CD4-positive, alpha-beta memory T cell (primary cell): ENCODE measurements at regions of chr13 and their contacts with region 1.

Region 1: GRCh38 chr13:30617315-30618185 is at the start of gene USPL1:
- DNase-seq: peak; percentile 97 to 99 (median 98)
- H3K4me3 ChIP-seq: peak within 1 kb of the TSS; percentile 98 to 99
- H3K4me3 Mint-ChIP-seq: no peak within 1 kb of the TSS
- H3K27ac ChIP-seq: peak within 1 kb of the TSS; percentile 94
- H3K27ac Mint-ChIP-seq: no peak within 1 kb of the TSS
- H3K4me1 ChIP-seq: peaks cover 40% of the 10 kb centered on the region
- H3K4me1 Mint-ChIP-seq: peaks cover 15 to 27% (median 25%) of the 10 kb centered on the region in 4 donors
- H3K27me3 ChIP-seq: no peaks in the 10 kb centered on the region
- H3K27me3 Mint-ChIP-seq: no peaks in the 10 kb centered on the region
- total RNA-seq, gene USPL1: 30.4 to 31.8 TPM

Region 2: GRCh38 chr13:29595380-29596063 is 1022.0 kb before region 1 on chr13 and contains the start of gene SLC7A1:
- CTCF ChIA-PET with region 1: no interaction called
- POLR2A ChIA-PET with region 1: no interaction called
- intact Hi-C with region 1: loop called (anchors 10 kb)
- DNase-seq: peak; percentile 80 to 90 (median 88)
- H3K4me3 ChIP-seq: peak within 1 kb of the TSS; percentile 59 to 61
- H3K4me3 Mint-ChIP-seq: peak within 1 kb of the TSS; percentile 87 to 94 (median 92)
- H3K27ac ChIP-seq: peak within 1 kb of the TSS; percentile 66
- H3K27ac Mint-ChIP-seq: peak within 1 kb of the TSS; percentile 90 to 97 (median 93)
- H3K4me1 ChIP-seq: peaks cover 25% of the 10 kb centered on the region
- H3K4me1 Mint-ChIP-seq: peaks cover 22 to 49% (median 34%) of the 10 kb centered on the region in 4 donors
- H3K27me3 ChIP-seq: no peaks in the 10 kb centered on the region
- H3K27me3 Mint-ChIP-seq: peaks cover 0 to 1% of the 10 kb centered on the region in 2 donors
- total RNA-seq, gene SLC7A1: 38.6 to 42.6 TPM

Region 3: DNA sequence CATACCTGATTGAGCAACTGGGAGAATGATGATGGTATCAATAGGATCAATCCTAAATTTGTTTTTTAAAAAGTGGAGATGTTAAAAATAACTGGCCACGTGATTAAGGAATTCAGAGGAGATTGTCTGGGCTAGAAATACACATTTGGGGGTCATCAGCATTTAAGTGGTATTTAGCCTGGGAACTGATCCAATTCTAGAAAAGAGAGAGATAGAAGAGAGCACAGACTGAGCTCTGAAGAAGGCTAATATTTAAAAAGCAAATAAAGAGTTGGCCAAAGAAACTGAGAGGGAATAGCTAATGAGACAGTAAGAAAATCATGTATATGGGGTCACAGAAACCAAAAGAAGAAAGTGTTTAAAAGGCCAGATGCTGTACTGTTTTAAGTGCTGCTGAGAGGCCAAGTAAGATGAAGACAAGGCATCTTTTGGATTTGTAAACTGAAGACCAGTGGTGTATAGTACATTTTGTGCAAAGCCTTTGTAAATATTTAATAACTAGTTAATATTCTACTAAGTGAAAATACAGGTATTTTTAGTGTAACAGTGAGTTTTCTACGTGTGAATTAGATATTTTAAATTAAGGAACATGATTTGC is 807.3 kb before region 1 on chr13:
- CTCF ChIA-PET with region 1: no interaction called
- POLR2A ChIA-PET with region 1: no interaction called
- intact Hi-C with region 1: no loop called
- DNase-seq: no peak
- H3K4me3 ChIP-seq: no peak overlapping the region
- H3K4me3 Mint-ChIP-seq: peak overlapping the region in 1 of 8 donors; percentile 54
- H3K27ac ChIP-seq: no peak overlapping the region
- H3K27ac Mint-ChIP-seq: peak overlapping the region in 1 of 7 donors; percentile 77
- H3K4me1 ChIP-seq: peaks cover 47% of the 10 kb centered on the region
- H3K4me1 Mint-ChIP-seq: peaks cover 43 to 56% (median 51%) of the 10 kb centered on the region in 4 donors
- H3K27me3 ChIP-seq: no peaks in the 10 kb centered on the region
- H3K27me3 Mint-ChIP-seq: no peaks in the 10 kb centered on the region

Region 4: DNA sequence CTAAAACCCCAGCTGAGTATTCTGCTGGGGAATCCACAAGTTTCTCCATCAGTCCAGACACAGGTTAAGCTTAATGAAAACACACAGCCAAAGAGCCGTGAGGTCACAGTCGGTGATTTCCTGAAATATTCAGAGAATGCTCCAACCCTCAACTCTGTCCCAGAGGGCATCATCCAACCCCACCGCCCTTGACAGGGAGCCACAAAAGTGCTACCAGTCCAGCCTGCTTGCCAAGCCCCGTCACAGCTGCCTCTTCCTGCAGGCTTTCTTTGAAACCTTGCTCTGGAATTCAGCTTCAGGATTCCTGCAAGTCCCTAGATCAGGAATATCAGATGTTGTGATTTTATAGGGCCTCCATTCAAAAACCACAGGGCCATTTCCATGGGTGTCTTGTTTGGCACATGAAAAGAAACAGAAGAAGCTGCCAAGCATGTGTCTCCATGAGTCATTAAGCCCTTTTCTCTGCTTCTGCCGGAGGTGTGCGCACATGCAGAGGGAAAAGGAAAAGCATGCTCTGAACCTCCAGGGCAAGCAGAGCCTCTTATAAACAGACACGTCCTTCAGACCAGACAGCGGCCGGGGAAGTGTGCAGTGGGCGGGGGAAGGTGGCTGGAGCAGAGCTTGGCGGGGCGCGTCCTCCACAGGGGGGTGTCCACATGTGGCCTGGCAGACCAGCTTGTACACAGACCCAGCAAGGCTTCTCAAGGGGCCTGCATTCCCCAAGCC is 474.9 kb before region 1 on chr13:
- CTCF ChIA-PET with region 1: no interaction called
- POLR2A ChIA-PET with region 1: interaction called, 4 read pairs
- intact Hi-C with region 1: loop called (anchors 5 kb)
- DNase-seq: peak; percentile 13 to 64 (median 22)
- H3K4me3 ChIP-seq: no peak overlapping the region
- H3K4me3 Mint-ChIP-seq: peak overlapping the region in 7 of 8 donors; percentile 4 to 74 (median 53)
- H3K27ac ChIP-seq: peak overlapping the region; percentile 27
- H3K27ac Mint-ChIP-seq: peak overlapping the region; percentile 83 to 92 (median 88)
- H3K4me1 ChIP-seq: peaks cover 67% of the 10 kb centered on the region
- H3K4me1 Mint-ChIP-seq: peaks cover 49 to 86% (median 70%) of the 10 kb centered on the region in 4 donors
- H3K27me3 ChIP-seq: no peaks in the 10 kb centered on the region
- H3K27me3 Mint-ChIP-seq: no peaks in the 10 kb centered on the region

Region 5: GRCh38 chr13:30371649-30372265 is 245.8 kb before region 1 on chr13:
- CTCF ChIA-PET with region 1: interaction called, 3 read pairs
- POLR2A ChIA-PET with region 1: interaction called, 76 read pairs
- intact Hi-C with region 1: loop called (anchors 1 kb)
- DNase-seq: peak; percentile 83 to 93 (median 88)
- H3K4me3 ChIP-seq: peak overlapping the region in 1 of 2 donors; percentile 41
- H3K4me3 Mint-ChIP-seq: peak overlapping the region; percentile 66 to 95 (median 87)
- H3K27ac ChIP-seq: peak overlapping the region; percentile 43
- H3K27ac Mint-ChIP-seq: peak overlapping the region; percentile 94 to 99 (median 98)
- H3K4me1 ChIP-seq: peaks cover 90% of the 10 kb centered on the region
- H3K4me1 Mint-ChIP-seq: peaks cover 66 to 92% (median 80%) of the 10 kb centered on the region in 4 donors
- H3K27me3 ChIP-seq: no peaks in the 10 kb centered on the region
- H3K27me3 Mint-ChIP-seq: peaks cover 0 to 3% of the 10 kb centered on the region in 2 donors

Region 6: GRCh38 chr13:30422054-30422839 is 195.3 kb before region 1 on chr13 and contains the start of gene UBE2L5:
- CTCF ChIA-PET with region 1: no interaction called
- POLR2A ChIA-PET with region 1: interaction called, 7 read pairs
- intact Hi-C with region 1: loop called (anchors 5 kb)
- DNase-seq: peak; percentile 68 to 77 (median 71)
- H3K4me3 ChIP-seq: peak within 1 kb of the TSS; percentile 42 to 58
- H3K4me3 Mint-ChIP-seq: peak within 1 kb of the TSS; percentile 81 to 94 (median 88)
- H3K27ac ChIP-seq: peak within 1 kb of the TSS; percentile 1
- H3K27ac Mint-ChIP-seq: peak within 1 kb of the TSS; percentile 78 to 93 (median 87)
- H3K4me1 ChIP-seq: peaks cover 19% of the 10 kb centered on the region
- H3K4me1 Mint-ChIP-seq: peaks cover 13 to 27% (median 18%) of the 10 kb centered on the region in 4 donors
- H3K27me3 ChIP-seq: no peaks in the 10 kb centered on the region
- H3K27me3 Mint-ChIP-seq: no peaks in the 10 kb centered on the region
- total RNA-seq, gene UBE2L5: not detected

Region 7: GRCh38 chr13:30673669-30674521 is 56.3 kb after region 1 on chr13:
- CTCF ChIA-PET with region 1: no interaction called
- POLR2A ChIA-PET with region 1: interaction called, 3 read pairs
- intact Hi-C with region 1: loop called (anchors 1 kb)
- DNase-seq: peak; percentile 87 to 91 (median 90)
- H3K4me3 ChIP-seq: peak overlapping the region; percentile 62 to 74
- H3K4me3 Mint-ChIP-seq: peak overlapping the region; percentile 85 to 94 (median 90)
- H3K27ac ChIP-seq: peak overlapping the region; percentile 20
- H3K27ac Mint-ChIP-seq: peak overlapping the region; percentile 83 to 100 (median 94)
- H3K4me1 ChIP-seq: peaks cover 7% of the 10 kb centered on the region
- H3K4me1 Mint-ChIP-seq: peaks cover 14 to 36% (median 20%) of the 10 kb centered on the region in 4 donors
- H3K27me3 ChIP-seq: no peaks in the 10 kb centered on the region
- H3K27me3 Mint-ChIP-seq: peaks cover 0 to 4% of the 10 kb centered on the region in 2 donors

Region 8: DNA sequence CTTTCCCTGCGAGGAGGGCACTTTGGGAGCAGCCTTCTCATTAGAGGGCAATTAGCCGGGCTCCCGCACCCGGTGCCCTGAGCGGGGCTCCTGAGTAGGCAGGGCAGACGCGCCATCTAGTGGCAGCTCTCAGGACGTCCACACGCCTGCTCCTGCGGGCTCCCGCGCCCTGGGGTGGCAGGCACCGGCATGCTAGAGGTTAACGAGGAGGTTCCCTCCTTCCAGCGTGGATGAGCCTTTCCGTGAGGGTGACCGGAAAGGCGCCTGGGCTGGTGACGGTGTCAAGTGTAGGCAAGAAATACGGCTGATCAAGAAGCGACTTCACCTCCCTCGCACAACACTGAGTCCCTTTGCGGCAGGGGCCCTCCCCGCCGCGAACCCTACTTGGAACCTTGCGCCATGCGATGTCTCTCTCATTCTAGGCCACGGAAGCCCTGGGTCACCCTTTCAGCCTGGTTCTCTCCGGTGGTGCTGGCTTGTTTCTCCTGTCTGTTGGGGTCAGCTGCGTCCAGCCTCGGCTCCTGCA is 185.5 kb after region 1 on chr13:
- CTCF ChIA-PET with region 1: no interaction called
- POLR2A ChIA-PET with region 1: interaction called, 3 read pairs
- intact Hi-C with region 1: loop called (anchors 2 kb)
- DNase-seq: peak; percentile 71 to 78 (median 74)
- H3K4me3 ChIP-seq: no peak overlapping the region
- H3K4me3 Mint-ChIP-seq: peak overlapping the region; percentile 32 to 76 (median 62)
- H3K27ac ChIP-seq: no peak overlapping the region
- H3K27ac Mint-ChIP-seq: peak overlapping the region in 4 of 7 donors; percentile 46 to 70 (median 62)
- H3K4me1 ChIP-seq: peaks cover 9% of the 10 kb centered on the region
- H3K4me1 Mint-ChIP-seq: peaks cover 7 to 21% (median 8%) of the 10 kb centered on the region in 4 donors
- H3K27me3 ChIP-seq: no peaks in the 10 kb centered on the region
- H3K27me3 Mint-ChIP-seq: no peaks in the 10 kb centered on the region